CD4-positive, alpha-beta memory T cell (primary cell): ENCODE measurements at regions of chr10 and their contacts with region 1.

Region 1: DNA sequence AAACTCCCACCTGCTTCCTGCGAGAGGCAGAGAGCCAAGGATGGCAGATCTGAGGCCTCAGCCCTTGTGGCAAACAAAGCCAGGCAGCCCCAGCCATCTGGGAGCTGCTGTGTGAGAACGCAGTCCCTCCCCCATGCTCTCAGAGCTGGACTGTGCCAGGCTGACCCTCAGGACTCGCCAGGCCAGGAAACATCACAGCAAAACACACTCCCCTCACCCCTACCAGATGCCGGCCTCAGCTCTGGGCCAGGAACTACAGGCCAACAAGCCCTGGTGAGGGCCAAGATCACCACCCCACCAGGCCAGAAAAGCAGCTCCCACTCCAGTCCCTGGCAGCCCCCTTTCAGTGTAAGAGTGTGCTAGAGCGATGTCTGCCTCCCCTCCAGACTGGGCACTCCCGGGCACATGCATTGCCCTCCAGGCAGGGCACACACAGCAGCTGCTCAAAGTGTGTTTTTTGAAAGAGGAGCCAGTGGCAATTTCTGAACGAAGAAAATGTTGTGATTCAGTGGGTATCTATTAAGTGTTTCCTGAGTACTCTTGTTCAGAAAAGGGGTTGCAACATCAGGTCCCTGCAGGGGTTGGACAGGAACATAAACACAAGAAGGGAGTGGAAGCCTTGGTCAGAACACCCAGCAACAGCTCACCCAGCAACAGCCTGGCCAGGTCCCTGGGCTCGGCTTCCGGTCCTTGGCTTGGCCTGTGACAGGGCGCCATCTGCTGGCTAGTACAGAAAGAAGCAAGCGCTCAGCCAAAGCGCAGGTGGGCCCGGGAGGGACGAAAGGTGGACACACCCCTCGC is 18.3 kb downstream of the LRRC20 start:
- DNase-seq: peak; percentile 78 to 81 (median 78)
- H3K4me3 ChIP-seq: no peak overlapping the region
- H3K4me3 Mint-ChIP-seq: peak overlapping the region in 5 of 8 donors; percentile 44 to 61 (median 46)
- H3K27ac ChIP-seq: no peak overlapping the region
- H3K27ac Mint-ChIP-seq: peak overlapping the region in 3 of 7 donors; percentile 59 to 84 (median 79)
- H3K4me1 ChIP-seq: peaks cover 10% of the 10 kb centered on the region
- H3K4me1 Mint-ChIP-seq: peaks cover 6 to 15% (median 8%) of the 10 kb centered on the region in 4 donors
- H3K27me3 ChIP-seq: no peaks in the 10 kb centered on the region
- H3K27me3 Mint-ChIP-seq: peaks cover 0 to 1% of the 10 kb centered on the region in 2 donors

Region 2: GRCh38 chr10:70115948-70116682 is 248.1 kb before region 1 on chr10:
- CTCF ChIA-PET with region 1: interaction called, 41 read pairs
- POLR2A ChIA-PET with region 1: no interaction called
- intact Hi-C with region 1: loop called (anchors 1 kb)
- DNase-seq: peak; percentile 49 to 57 (median 55)
- H3K4me3 ChIP-seq: no peak overlapping the region
- H3K4me3 Mint-ChIP-seq: peak overlapping the region in 1 of 8 donors; percentile 49
- H3K27ac ChIP-seq: no peak overlapping the region
- H3K27ac Mint-ChIP-seq: peak overlapping the region in 1 of 7 donors; percentile 74
- H3K4me1 ChIP-seq: peaks cover 5% of the 10 kb centered on the region
- H3K4me1 Mint-ChIP-seq: peaks cover 0 to 7% (median 4%) of the 10 kb centered on the region in 4 donors
- H3K27me3 ChIP-seq: no peaks in the 10 kb centered on the region
- H3K27me3 Mint-ChIP-seq: no peaks in the 10 kb centered on the region

Region 3: DNA sequence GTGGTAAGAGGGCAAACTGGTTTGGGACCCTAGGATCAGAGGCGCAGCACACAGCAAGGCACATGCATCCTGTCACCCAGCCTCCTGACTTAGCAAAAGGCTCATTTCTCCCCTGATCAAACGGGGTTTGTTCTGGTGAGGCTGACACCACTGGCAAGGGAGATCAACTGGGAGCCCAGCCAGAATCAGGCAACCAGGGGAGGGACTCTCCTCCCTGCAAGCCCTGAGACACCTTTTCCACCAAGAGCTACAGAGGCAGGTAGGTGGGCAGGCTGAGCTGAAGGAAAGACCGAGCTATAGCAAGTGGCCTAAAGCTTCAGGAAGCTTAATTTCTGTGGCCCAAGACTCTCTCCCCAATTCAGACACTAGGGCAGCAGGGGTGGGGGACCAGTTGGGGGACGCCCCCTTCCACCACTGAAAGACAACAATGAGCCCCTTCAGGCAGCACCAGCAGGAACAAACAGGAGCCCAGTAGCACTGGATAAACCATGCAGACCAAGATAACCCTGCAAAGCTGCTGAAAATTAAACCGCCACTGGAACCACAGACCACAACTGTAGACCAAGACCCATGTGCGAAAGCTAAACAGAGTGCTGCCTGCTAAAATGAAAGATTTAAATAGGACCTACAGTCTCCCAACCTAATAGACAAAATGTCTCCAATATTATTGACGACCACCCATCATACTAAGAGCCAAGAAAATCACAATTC is 166.8 kb before region 1 on chr10:
- CTCF ChIA-PET with region 1: interaction called, 10 read pairs
- POLR2A ChIA-PET with region 1: no interaction called
- intact Hi-C with region 1: no loop called
- DNase-seq: peak in 1 of 5 donors; percentile 2
- H3K4me3 ChIP-seq: no peak overlapping the region
- H3K4me3 Mint-ChIP-seq: peak overlapping the region in 3 of 8 donors; percentile 13 to 49 (median 46)
- H3K27ac ChIP-seq: no peak overlapping the region
- H3K27ac Mint-ChIP-seq: peak overlapping the region in 2 of 7 donors; percentile 12 to 48
- H3K4me1 ChIP-seq: peaks cover 10% of the 10 kb centered on the region
- H3K4me1 Mint-ChIP-seq: peaks cover 4 to 12% (median 10%) of the 10 kb centered on the region in 4 donors
- H3K27me3 ChIP-seq: no peaks in the 10 kb centered on the region
- H3K27me3 Mint-ChIP-seq: no peaks in the 10 kb centered on the region

Region 4: GRCh38 chr10:70227548-70228320 is 136.4 kb before region 1 on chr10:
- CTCF ChIA-PET with region 1: interaction called, 558 read pairs
- POLR2A ChIA-PET with region 1: interaction called, 43 read pairs
- intact Hi-C with region 1: no loop called
- DNase-seq: no peak
- H3K4me3 ChIP-seq: no peak overlapping the region
- H3K4me3 Mint-ChIP-seq: no peak overlapping the region
- H3K27ac ChIP-seq: no peak overlapping the region
- H3K27ac Mint-ChIP-seq: no peak overlapping the region
- H3K4me1 ChIP-seq: peaks cover 26% of the 10 kb centered on the region
- H3K4me1 Mint-ChIP-seq: peaks cover 17 to 58% (median 38%) of the 10 kb centered on the region in 4 donors
- H3K27me3 ChIP-seq: no peaks in the 10 kb centered on the region
- H3K27me3 Mint-ChIP-seq: no peaks in the 10 kb centered on the region

Region 5: GRCh38 chr10:70267161-70267933 is 96.8 kb before region 1 on chr10:
- CTCF ChIA-PET with region 1: interaction called, 31 read pairs
- POLR2A ChIA-PET with region 1: no interaction called
- intact Hi-C with region 1: loop called (anchors 2 kb)
- DNase-seq: no peak
- H3K4me3 ChIP-seq: no peak overlapping the region
- H3K4me3 Mint-ChIP-seq: no peak overlapping the region
- H3K27ac ChIP-seq: no peak overlapping the region
- H3K27ac Mint-ChIP-seq: no peak overlapping the region
- H3K4me1 ChIP-seq: no peaks in the 10 kb centered on the region
- H3K4me1 Mint-ChIP-seq: peaks cover 0 to 2% (median 1%) of the 10 kb centered on the region in 4 donors
- H3K27me3 ChIP-seq: no peaks in the 10 kb centered on the region
- H3K27me3 Mint-ChIP-seq: peaks cover 0 to 3% of the 10 kb centered on the region in 2 donors

Region 6: GRCh38 chr10:70374775-70375614 is 10.8 kb after region 1 on chr10:
- CTCF ChIA-PET with region 1: interaction called, 20 read pairs
- POLR2A ChIA-PET with region 1: no interaction called
- intact Hi-C with region 1: no loop called
- DNase-seq: no peak
- H3K4me3 ChIP-seq: no peak overlapping the region
- H3K4me3 Mint-ChIP-seq: no peak overlapping the region
- H3K27ac ChIP-seq: no peak overlapping the region
- H3K27ac Mint-ChIP-seq: peak overlapping the region in 1 of 7 donors; percentile 13
- H3K4me1 ChIP-seq: no peaks in the 10 kb centered on the region
- H3K4me1 Mint-ChIP-seq: no peaks in the 10 kb centered on the region
- H3K27me3 ChIP-seq: no peaks in the 10 kb centered on the region
- H3K27me3 Mint-ChIP-seq: no peaks in the 10 kb centered on the region

Region 7: GRCh38 chr10:70404036-70404786 is 40.0 kb after region 1 on chr10 and contains the start of gene EIF4EBP2:
- CTCF ChIA-PET with region 1: interaction called, 25 read pairs
- POLR2A ChIA-PET with region 1: interaction called, 3 read pairs
- intact Hi-C with region 1: no loop called
- DNase-seq: peak; percentile 95 to 99 (median 96)
- H3K4me3 ChIP-seq: peak within 1 kb of the TSS; percentile 32 to 78
- H3K4me3 Mint-ChIP-seq: peak within 1 kb of the TSS; percentile 92 to 98 (median 98)
- H3K27ac ChIP-seq: peak within 1 kb of the TSS; percentile 86
- H3K27ac Mint-ChIP-seq: peak within 1 kb of the TSS; percentile 87 to 97 (median 95)
- H3K4me1 ChIP-seq: peaks cover 32% of the 10 kb centered on the region
- H3K4me1 Mint-ChIP-seq: peaks cover 30 to 51% (median 40%) of the 10 kb centered on the region in 4 donors
- H3K27me3 ChIP-seq: no peaks in the 10 kb centered on the region
- H3K27me3 Mint-ChIP-seq: no peaks in the 10 kb centered on the region
- total RNA-seq, gene EIF4EBP2: 54.5 to 56.9 TPM